Activated CD4-positive, alpha-beta memory T cell treated with anti-CD3 and anti-CD28 coated beads for 36 hours (primary cell): ENCODE measurements at regions of chr3 and their contacts with region 1.

Region 1: GRCh38 chr3:69084326-69085167 is at the start of gene ARL6IP5:
- DNase-seq: peak; percentile 96
- H3K4me3 Mint-ChIP-seq: peak within 1 kb of the TSS; percentile 97
- H3K27ac Mint-ChIP-seq: peak within 1 kb of the TSS; percentile 97
- H3K4me1 Mint-ChIP-seq: peaks cover 57% of the 10 kb centered on the region
- H3K27me3 Mint-ChIP-seq: no peaks in the 10 kb centered on the region
- total RNA-seq, gene ARL6IP5: 93.9 to 94.8 TPM

Region 2: GRCh38 chr3:68996356-68996995 is 88.1 kb before region 1 on chr3:
- CTCF ChIA-PET with region 1: no interaction called
- POLR2A ChIA-PET with region 1: no interaction called
- intact Hi-C with region 1: loop called (anchors 2 kb)
- DNase-seq: peak; percentile 50
- H3K4me3 Mint-ChIP-seq: no peak overlapping the region
- H3K27ac Mint-ChIP-seq: peak overlapping the region; percentile 56
- H3K4me1 Mint-ChIP-seq: peaks cover 21% of the 10 kb centered on the region
- H3K27me3 Mint-ChIP-seq: no peaks in the 10 kb centered on the region

Region 3: DNA sequence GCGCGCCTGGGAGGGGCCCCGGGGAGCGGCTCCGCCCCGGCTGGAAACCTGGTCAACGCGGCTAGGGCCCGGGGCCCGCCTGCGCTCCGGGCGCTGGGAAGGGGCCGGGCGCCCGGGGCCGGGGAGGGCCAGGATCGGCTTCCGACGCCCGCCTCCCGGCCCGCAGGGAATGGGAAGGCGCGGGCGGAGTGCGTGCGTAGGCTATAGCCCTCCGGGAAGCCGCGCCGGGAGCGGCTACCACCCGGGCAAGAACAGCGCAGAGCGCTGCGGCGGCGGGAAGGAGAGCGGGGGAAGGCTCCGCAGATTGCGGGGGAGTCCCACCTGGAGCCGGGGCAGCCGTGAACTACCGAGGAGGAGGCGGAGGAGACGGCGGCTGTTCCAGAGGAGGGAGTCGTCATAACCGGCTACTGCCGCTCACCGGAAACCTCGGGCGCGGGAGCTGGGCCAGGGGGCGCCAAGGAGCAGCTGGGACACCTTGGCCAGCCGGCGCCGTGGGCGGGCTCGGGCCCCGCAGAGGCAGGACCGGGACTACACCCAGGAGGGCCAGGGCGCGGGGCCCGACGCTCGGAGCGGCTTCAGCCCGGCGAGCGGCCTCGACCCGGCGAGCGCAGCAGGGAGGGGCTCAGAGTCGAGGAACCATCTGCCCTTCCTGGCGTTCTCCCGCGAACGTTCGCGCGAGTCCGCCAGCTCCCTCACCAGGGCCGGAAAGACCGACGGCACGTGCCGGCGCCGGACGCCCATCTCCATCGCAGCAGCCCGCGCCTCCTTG is 71.1 kb before region 1 on chr3 and contains the start of gene EOGT:
- CTCF ChIA-PET with region 1: interaction called, 3 read pairs
- POLR2A ChIA-PET with region 1: interaction called, 4 read pairs
- intact Hi-C with region 1: loop called (anchors 2 kb)
- DNase-seq: peak; percentile 90
- H3K4me3 Mint-ChIP-seq: peak within 1 kb of the TSS; percentile 77
- H3K27ac Mint-ChIP-seq: peak within 1 kb of the TSS; percentile 72
- H3K4me1 Mint-ChIP-seq: peaks cover 32% of the 10 kb centered on the region
- H3K27me3 Mint-ChIP-seq: no peaks in the 10 kb centered on the region
- total RNA-seq, gene EOGT: 9.3 to 12.0 TPM

Region 4: DNA sequence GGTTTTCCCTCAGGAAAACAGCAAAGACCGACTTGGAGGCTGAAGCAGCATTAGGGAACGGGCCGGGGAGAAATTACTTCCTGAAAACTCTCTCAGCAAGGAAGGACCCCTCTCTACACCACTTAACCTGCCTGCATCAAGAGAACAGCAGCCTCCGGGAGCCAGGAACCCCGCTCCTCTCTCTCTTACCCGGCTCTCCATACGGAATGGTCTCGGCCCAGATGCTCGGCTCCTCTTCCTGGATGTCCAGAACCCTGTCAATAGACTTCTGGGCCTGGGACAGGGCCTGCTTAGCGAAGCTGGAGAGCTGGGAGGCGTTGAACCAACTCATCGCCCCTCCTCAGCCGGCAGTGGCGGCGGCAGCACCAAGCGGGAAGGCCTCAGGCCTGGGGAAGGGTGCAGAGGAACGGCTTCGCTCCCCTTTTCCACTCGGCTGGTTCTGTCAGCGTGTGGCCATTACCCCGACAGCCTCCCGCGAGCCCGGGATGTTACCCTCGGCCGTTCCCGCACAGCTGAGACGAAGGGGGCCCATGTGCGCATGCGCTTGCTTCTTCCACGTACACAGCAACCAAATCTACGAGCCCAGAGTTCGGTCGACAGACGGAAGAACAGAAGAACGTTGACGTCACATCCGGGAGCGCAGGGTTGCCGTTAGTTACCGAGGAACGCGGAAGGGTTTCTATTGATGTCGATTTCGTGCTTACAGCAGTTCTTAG is 32.6 kb before region 1 on chr3 and contains the start of gene TMF1:
- CTCF ChIA-PET with region 1: interaction called, 5 read pairs
- POLR2A ChIA-PET with region 1: interaction called, 28 read pairs
- intact Hi-C with region 1: loop called (anchors 1 kb)
- DNase-seq: peak; percentile 99
- H3K4me3 Mint-ChIP-seq: peak within 1 kb of the TSS; percentile 98
- H3K27ac Mint-ChIP-seq: peak within 1 kb of the TSS; percentile 97
- H3K4me1 Mint-ChIP-seq: peaks cover 33% of the 10 kb centered on the region
- H3K27me3 Mint-ChIP-seq: peaks cover 2% of the 10 kb centered on the region
- total RNA-seq, gene TMF1: 37.1 to 42.1 TPM

Region 5: GRCh38 chr3:69058180-69058946 is 26.2 kb before region 1 on chr3:
- CTCF ChIA-PET with region 1: interaction called, 5 read pairs
- POLR2A ChIA-PET with region 1: interaction called, 38 read pairs
- intact Hi-C with region 1: loop called (anchors 1 kb)
- DNase-seq: no peak
- H3K4me3 Mint-ChIP-seq: no peak overlapping the region
- H3K27ac Mint-ChIP-seq: peak overlapping the region; percentile 93
- H3K4me1 Mint-ChIP-seq: peaks cover 32% of the 10 kb centered on the region
- H3K27me3 Mint-ChIP-seq: no peaks in the 10 kb centered on the region

Region 6: GRCh38 chr3:69065318-69065964 is 19.1 kb before region 1 on chr3:
- CTCF ChIA-PET with region 1: interaction called, 5 read pairs
- POLR2A ChIA-PET with region 1: interaction called, 38 read pairs
- intact Hi-C with region 1: loop called (anchors 1 kb)
- DNase-seq: peak; percentile 50
- H3K4me3 Mint-ChIP-seq: peak overlapping the region; percentile 23
- H3K27ac Mint-ChIP-seq: peak overlapping the region; percentile 76
- H3K4me1 Mint-ChIP-seq: peaks cover 40% of the 10 kb centered on the region
- H3K27me3 Mint-ChIP-seq: no peaks in the 10 kb centered on the region

Region 7: GRCh38 chr3:69710153-69710977 is 625.8 kb after region 1 on chr3:
- CTCF ChIA-PET with region 1: no interaction called
- POLR2A ChIA-PET with region 1: no interaction called
- intact Hi-C with region 1: no loop called
- DNase-seq: no peak
- H3K4me3 Mint-ChIP-seq: no peak overlapping the region
- H3K27ac Mint-ChIP-seq: no peak overlapping the region
- H3K4me1 Mint-ChIP-seq: no peaks in the 10 kb centered on the region
- H3K27me3 Mint-ChIP-seq: no peaks in the 10 kb centered on the region